Activated CD4-positive, alpha-beta T cell treated with anti-CD3 and anti-CD28 coated beads for 36 hours (primary cell): ENCODE measurements at regions of chr13 and their contacts with region 1.

Region 1: GRCh38 chr13:51583875-51584730 is at the start of gene WDFY2:
- DNase-seq: peak; percentile 100
- ATAC-seq: peak; percentile 88
- H3K4me3 Mint-ChIP-seq: peak within 1 kb of the TSS; percentile 89
- H3K27ac Mint-ChIP-seq: peak within 1 kb of the TSS; percentile 95
- H3K4me1 Mint-ChIP-seq: peaks cover 37% of the 10 kb centered on the region
- H3K27me3 Mint-ChIP-seq: no peaks in the 10 kb centered on the region
- total RNA-seq, gene WDFY2: 7.4 to 9.5 TPM

Region 2: GRCh38 chr13:51502153-51502651 is 81.9 kb before region 1 on chr13:
- CTCF ChIA-PET with region 1: no interaction called
- POLR2A ChIA-PET with region 1: interaction called, 3 read pairs
- intact Hi-C with region 1: loop called (anchors 1 to 2 kb)
- DNase-seq: peak; percentile 68
- ATAC-seq: peak; percentile 92
- H3K4me3 Mint-ChIP-seq: no peak overlapping the region
- H3K27ac Mint-ChIP-seq: peak overlapping the region; percentile 73
- H3K4me1 Mint-ChIP-seq: peaks cover 29% of the 10 kb centered on the region
- H3K27me3 Mint-ChIP-seq: peaks cover 2% of the 10 kb centered on the region

Region 3: GRCh38 chr13:51614350-51614786 is 30.3 kb after region 1 on chr13:
- CTCF ChIA-PET with region 1: interaction called, 3 read pairs
- POLR2A ChIA-PET with region 1: interaction called, 8 read pairs
- intact Hi-C with region 1: loop called (anchors 1 kb)
- DNase-seq: peak; percentile 77
- ATAC-seq: peak; percentile 95
- H3K4me3 Mint-ChIP-seq: peak overlapping the region; percentile 73
- H3K27ac Mint-ChIP-seq: peak overlapping the region; percentile 91
- H3K4me1 Mint-ChIP-seq: peaks cover 23% of the 10 kb centered on the region
- H3K27me3 Mint-ChIP-seq: no peaks in the 10 kb centered on the region

Region 4: GRCh38 chr13:51645154-51645650 is 61.1 kb after region 1 on chr13:
- CTCF ChIA-PET with region 1: no interaction called
- POLR2A ChIA-PET with region 1: interaction called, 4 read pairs
- intact Hi-C with region 1: loop called (anchors 1 to 2 kb)
- DNase-seq: peak; percentile 24
- ATAC-seq: peak; percentile 48
- H3K4me3 Mint-ChIP-seq: peak overlapping the region; percentile 29
- H3K27ac Mint-ChIP-seq: peak overlapping the region; percentile 90
- H3K4me1 Mint-ChIP-seq: peaks cover 43% of the 10 kb centered on the region
- H3K27me3 Mint-ChIP-seq: no peaks in the 10 kb centered on the region

Region 5: DNA sequence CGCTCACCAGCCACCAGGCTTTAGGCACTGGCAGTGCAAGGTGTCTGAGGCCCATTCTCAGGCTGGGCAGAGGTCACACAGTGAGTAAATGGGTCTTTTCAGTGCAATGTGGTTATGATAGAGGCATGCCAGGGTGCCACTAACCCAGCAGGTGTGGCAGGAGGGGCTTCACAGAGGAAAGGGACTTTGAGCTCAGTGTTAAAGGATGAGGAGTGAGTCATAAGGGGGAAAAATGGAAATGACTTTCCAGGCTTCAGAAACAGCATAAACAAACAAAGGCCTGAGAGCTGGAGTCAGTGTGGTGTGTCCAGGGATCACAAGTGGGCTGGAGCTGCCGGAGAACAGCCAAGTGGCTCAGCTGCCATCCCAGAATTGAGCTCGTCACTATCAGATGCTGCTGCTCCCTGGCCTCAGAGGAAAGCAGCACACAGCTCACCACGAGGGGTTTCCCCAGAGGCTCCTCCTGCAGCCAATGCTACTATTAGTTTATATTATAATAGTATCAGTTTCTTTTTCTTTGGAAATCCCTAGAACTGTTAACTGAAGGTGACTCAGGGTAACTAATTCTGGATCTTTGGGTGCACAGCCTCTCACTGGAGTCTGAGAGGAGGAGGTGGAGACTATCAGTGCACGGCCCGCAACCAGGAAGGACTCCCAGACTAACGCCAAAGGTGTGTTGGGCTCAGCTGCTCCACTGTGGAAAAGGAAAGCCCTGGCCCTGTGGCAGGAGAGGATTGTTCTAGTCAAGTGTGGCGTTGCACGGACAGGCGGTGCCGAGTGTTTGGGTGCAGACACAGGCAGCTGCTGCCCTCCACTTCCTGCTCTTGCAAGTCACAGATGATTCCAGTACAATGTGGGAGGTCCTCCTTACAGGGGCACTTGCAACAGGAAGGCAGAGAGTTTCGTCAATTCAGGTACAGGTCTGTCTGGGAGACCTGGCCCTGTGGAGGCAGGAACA is 180.4 kb after region 1 on chr13:
- CTCF ChIA-PET with region 1: interaction called, 6 read pairs
- POLR2A ChIA-PET with region 1: interaction called, 5 read pairs
- intact Hi-C with region 1: loop called (anchors 1 kb)
- DNase-seq: peak; percentile 83
- ATAC-seq: peak; percentile 91
- H3K4me3 Mint-ChIP-seq: peak overlapping the region; percentile 74
- H3K27ac Mint-ChIP-seq: peak overlapping the region; percentile 97
- H3K4me1 Mint-ChIP-seq: peaks cover 45% of the 10 kb centered on the region
- H3K27me3 Mint-ChIP-seq: no peaks in the 10 kb centered on the region

Region 6: DNA sequence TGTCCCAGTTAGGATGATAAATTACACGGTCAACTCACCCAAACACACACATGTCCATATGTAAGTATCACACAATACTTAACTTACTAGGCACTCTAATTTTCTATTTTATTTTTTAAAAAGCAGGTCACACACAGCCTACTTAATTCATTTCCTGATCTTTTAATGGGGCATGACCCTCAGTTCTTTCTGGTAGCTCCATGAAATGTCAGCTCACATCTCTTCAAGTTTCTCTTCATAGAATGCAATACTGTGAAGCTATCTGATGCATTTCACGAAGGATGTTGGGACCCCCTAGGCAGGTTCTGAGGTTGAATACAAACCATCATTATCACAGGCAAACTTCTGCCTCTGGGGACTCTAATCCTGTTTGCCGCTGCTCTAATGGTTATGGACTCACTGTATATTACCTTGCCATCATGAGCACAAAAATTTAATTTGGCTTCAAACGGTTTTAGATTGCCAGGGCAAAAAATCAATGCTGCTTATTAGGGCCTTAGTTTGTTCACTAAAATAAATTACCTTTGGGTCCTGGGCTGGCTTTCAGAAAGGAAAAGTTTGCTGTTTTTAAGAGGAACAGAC is 236.0 kb after region 1 on chr13:
- CTCF ChIA-PET with region 1: interaction called, 3 read pairs
- POLR2A ChIA-PET with region 1: no interaction called
- intact Hi-C with region 1: loop called in 1 of 2 experiments (anchors 1 kb)
- DNase-seq: no peak
- ATAC-seq: no peak
- H3K4me3 Mint-ChIP-seq: peak overlapping the region; percentile 42
- H3K27ac Mint-ChIP-seq: peak overlapping the region; percentile 85
- H3K4me1 Mint-ChIP-seq: peaks cover 92% of the 10 kb centered on the region
- H3K27me3 Mint-ChIP-seq: no peaks in the 10 kb centered on the region

Region 7: GRCh38 chr13:51911860-51912510 is 327.9 kb after region 1 on chr13:
- CTCF ChIA-PET with region 1: no interaction called
- POLR2A ChIA-PET with region 1: no interaction called
- intact Hi-C with region 1: no loop called
- DNase-seq: no peak
- ATAC-seq: no peak
- H3K4me3 Mint-ChIP-seq: no peak overlapping the region
- H3K27ac Mint-ChIP-seq: no peak overlapping the region
- H3K4me1 Mint-ChIP-seq: peaks cover 23% of the 10 kb centered on the region
- H3K27me3 Mint-ChIP-seq: no peaks in the 10 kb centered on the region

Region 8: DNA sequence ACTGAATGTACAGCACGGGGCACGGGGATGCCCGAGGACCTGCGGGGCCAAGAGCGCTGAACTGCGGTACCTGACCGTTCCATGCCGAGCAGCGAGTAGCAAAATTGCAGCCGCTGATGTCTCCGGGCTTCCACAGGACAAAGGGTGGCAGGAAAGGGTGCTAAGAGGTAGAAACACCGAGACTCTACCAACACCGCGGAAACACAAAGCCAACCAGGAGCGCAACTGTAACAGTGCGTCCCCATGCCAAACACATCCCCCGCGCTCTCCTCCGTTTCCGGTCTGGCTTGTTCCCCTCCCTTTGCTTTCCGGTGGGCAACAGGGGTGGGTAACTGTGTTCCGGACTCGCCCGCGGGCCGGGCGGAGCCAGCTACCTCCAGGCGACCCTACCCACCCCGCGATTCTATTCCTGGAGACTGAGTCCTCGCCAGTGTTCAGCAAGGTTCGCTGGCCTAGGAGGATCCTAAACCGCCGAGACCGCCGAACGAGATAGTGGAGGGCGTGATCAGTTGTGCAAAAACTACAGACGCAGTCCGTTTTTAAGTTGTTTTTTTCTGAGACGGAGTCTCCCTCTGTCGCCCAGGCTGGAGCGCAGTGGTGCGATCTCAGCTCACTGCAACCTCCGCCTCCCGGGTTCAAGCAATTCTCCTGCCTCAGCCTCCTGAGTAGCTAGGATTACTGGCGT is 610.2 kb after region 1 on chr13:
- CTCF ChIA-PET with region 1: no interaction called
- POLR2A ChIA-PET with region 1: no interaction called
- intact Hi-C with region 1: loop called in 1 of 2 experiments (anchors 10 kb)
- DNase-seq: peak; percentile 92
- ATAC-seq: peak; percentile 83
- H3K4me3 Mint-ChIP-seq: peak overlapping the region; percentile 86
- H3K27ac Mint-ChIP-seq: peak overlapping the region; percentile 100
- H3K4me1 Mint-ChIP-seq: peaks cover 32% of the 10 kb centered on the region
- H3K27me3 Mint-ChIP-seq: no peaks in the 10 kb centered on the region